Aorta (tissue), 5 donors: ENCODE measurements at regions of chr2 and their contacts with region 1.

Region 1: GRCh38 chr2:191218292-191218898 is 26.8 kb upstream of the MYO1B start:
- DNase-seq: no peak
- ATAC-seq: no peak
- H3K4me3 ChIP-seq: no peak overlapping the region
- H3K27ac ChIP-seq: no peak overlapping the region
- H3K4me1 ChIP-seq: peaks cover 0 to 2% of the 10 kb centered on the region in 2 donors
- H3K27me3 ChIP-seq: no peaks in the 10 kb centered on the region

Region 2: DNA sequence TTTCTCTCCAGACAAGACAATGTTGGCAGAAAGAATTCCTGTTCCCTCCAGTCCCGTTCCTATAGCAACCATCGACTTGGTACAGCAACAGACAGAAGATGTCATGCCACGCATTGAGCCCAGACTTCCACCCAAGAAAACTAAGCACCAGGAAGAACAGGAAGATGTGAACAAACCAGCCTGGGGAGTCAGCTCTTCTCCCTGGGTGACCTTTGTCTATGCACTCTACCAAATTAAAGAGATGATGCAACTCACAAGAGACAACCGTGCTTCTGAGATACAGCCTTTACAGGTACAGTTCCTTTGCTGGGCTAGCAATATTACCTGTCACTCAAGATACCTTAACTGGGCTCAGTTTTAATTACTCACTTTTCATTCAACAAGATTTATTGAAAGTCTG is 721.0 kb before region 1 on chr2:
- intact Hi-C with region 1: no loop called
- DNase-seq: no peak
- ATAC-seq: no peak
- H3K4me3 ChIP-seq: no peak overlapping the region
- H3K27ac ChIP-seq: no peak overlapping the region
- H3K4me1 ChIP-seq: no peaks in the 10 kb centered on the region
- H3K27me3 ChIP-seq: no peaks in the 10 kb centered on the region

Region 3: DNA sequence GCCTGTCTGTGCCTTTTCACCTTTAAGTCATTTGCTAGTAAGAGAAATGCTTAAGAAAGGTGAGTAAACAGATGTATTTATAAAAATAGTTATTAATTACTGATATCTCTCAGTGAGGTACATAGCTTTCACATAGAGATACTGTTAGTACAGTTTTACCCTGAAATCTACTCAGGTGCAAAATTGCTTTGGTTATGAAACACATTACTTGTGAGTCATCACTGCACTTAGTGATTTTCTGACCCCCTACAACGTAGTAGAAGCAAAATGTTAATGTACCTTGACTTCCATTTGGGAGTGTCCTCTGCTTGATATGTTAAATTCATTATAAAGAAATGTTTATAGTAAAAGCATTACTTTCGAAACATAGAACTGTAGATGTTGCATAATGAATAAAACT is 331.3 kb before region 1 on chr2:
- intact Hi-C with region 1: no loop called
- DNase-seq: no peak
- ATAC-seq: no peak
- H3K4me3 ChIP-seq: peak overlapping the region in 1 of 2 donors; percentile 48
- H3K27ac ChIP-seq: no peak overlapping the region
- H3K4me1 ChIP-seq: peaks cover 0 to 3% of the 10 kb centered on the region in 2 donors
- H3K27me3 ChIP-seq: no peaks in the 10 kb centered on the region

Region 4: GRCh38 chr2:191171708-191172355 is 46.6 kb before region 1 on chr2:
- intact Hi-C with region 1: loop called in 1 of 2 experiments (anchors 10 kb)
- DNase-seq: no peak
- ATAC-seq: no peak
- H3K4me3 ChIP-seq: no peak overlapping the region
- H3K27ac ChIP-seq: no peak overlapping the region
- H3K4me1 ChIP-seq: peaks cover 0 to 15% of the 10 kb centered on the region in 2 donors
- H3K27me3 ChIP-seq: no peaks in the 10 kb centered on the region